Heart left ventricle (tissue), 16 donors: ENCODE measurements at regions of chr7 and their contacts with region 1.

Region 1: GRCh38 chr7:93390660-93391059 is 158.5 kb downstream of the VPS50 start:
- DNase-seq: no peak
- ATAC-seq: no peak
- H3K4me3 ChIP-seq: no peak overlapping the region
- H3K27ac ChIP-seq: no peak overlapping the region
- H3K4me1 ChIP-seq: no peaks in the 10 kb centered on the region
- H3K27me3 ChIP-seq: no peaks in the 10 kb centered on the region
- CTCF ChIP-seq: no peak
- POLR2A ChIP-seq: no peak

Region 2: GRCh38 chr7:93315896-93316295 is 74.8 kb before region 1 on chr7:
- intact Hi-C with region 1: no loop called
- DNase-seq: no peak
- ATAC-seq: no peak
- H3K4me3 ChIP-seq: no peak overlapping the region
- H3K27ac ChIP-seq: no peak overlapping the region
- H3K4me1 ChIP-seq: no peaks in the 10 kb centered on the region
- H3K27me3 ChIP-seq: no peaks in the 10 kb centered on the region
- CTCF ChIP-seq: no peak
- POLR2A ChIP-seq: no peak

Region 3: DNA sequence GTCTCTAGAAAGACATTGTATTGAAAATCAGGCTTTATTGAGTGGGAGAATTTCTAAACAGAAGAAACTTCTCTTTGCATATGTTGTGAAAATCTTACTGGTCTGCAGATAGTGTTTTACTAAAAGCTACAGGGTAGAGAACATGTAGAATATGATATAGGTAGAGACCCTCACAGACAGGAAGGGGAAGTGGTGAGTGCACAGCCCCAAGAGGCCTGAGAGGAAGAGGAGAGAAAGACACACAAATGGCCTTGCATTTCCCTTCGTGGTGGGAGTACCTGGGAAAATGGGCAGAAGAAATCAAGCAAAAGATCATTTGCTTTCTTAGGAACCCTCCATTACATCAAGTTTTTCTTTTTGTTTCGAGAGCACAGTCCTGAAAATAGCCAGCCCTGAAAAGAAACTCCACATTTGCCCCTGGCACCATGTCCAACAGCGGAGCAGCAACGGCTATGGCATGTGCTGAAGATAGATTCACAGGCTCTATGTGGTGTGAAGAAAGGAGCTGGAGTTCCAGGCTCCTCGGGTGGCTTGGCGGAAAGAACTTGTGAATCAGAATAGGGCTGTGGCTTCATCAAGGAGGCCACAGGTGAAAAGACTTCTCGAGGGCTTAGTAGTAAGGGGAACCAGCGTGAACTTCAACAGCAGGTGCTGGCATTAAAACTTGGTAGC is 40.4 kb after region 1 on chr7:
- intact Hi-C with region 1: loop called in 1 of 10 experiments (anchors 2 kb)
- DNase-seq: no peak
- ATAC-seq: no peak
- H3K4me3 ChIP-seq: no peak overlapping the region
- H3K27ac ChIP-seq: no peak overlapping the region
- H3K4me1 ChIP-seq: no peaks in the 10 kb centered on the region
- H3K27me3 ChIP-seq: no peaks in the 10 kb centered on the region
- CTCF ChIP-seq: no peak
- POLR2A ChIP-seq: no peak